K562 (cell line): ENCODE measurements at regions of chr3 and their contacts with region 1.

Region 1: GRCh38 chr3:155323063-155323666 is 29.7 kb upstream of the STRIT1 start:
- DNase-seq: peak; percentile 50 to 89 (median 62)
- ATAC-seq: peak; percentile 88
- H3K4me3 ChIP-seq: no peak overlapping the region
- H3K27ac ChIP-seq: no peak overlapping the region
- H3K4me1 ChIP-seq: peaks cover 0 to 12% of the 10 kb centered on the region in 2 experiments; a peak in 2 of 5 replicates
- H3K27me3 ChIP-seq: no peaks in the 10 kb centered on the region
- CTCF ChIP-seq: peak; percentile 74 to 94 (median 80)
- EP300 ChIP-seq: peak; percentile 38; the same call in 1 of the 2 replicates
- POLR2A ChIP-seq: no peak
- RAD21 ChIP-seq: peak; percentile 98

Region 2: GRCh38 chr3:154334973-154335420 is 988.2 kb before region 1 on chr3:
- CTCF ChIA-PET with region 1: no interaction called
- POLR2A ChIA-PET with region 1: no interaction called
- in situ Hi-C with region 1: no loop called
- intact Hi-C with region 1: loop called (anchors 1 kb)
- DNase-seq: peak in 3 of 4 experiments; percentile 20 to 32 (median 27)
- ATAC-seq: peak; percentile 70
- H3K4me3 ChIP-seq: no peak overlapping the region
- H3K27ac ChIP-seq: no peak overlapping the region
- H3K4me1 ChIP-seq: peaks cover 0 to 5% of the 10 kb centered on the region in 2 experiments; a peak in 2 of 5 replicates
- H3K27me3 ChIP-seq: no peaks in the 10 kb centered on the region; a peak in 1 of 5 replicates
- CTCF ChIP-seq: peak; percentile 11 to 59 (median 20); a peak in 3 of 6 replicates
- EP300 ChIP-seq: no peak
- POLR2A ChIP-seq: no peak
- RAD21 ChIP-seq: peak; percentile 30 to 41

Region 3: DNA sequence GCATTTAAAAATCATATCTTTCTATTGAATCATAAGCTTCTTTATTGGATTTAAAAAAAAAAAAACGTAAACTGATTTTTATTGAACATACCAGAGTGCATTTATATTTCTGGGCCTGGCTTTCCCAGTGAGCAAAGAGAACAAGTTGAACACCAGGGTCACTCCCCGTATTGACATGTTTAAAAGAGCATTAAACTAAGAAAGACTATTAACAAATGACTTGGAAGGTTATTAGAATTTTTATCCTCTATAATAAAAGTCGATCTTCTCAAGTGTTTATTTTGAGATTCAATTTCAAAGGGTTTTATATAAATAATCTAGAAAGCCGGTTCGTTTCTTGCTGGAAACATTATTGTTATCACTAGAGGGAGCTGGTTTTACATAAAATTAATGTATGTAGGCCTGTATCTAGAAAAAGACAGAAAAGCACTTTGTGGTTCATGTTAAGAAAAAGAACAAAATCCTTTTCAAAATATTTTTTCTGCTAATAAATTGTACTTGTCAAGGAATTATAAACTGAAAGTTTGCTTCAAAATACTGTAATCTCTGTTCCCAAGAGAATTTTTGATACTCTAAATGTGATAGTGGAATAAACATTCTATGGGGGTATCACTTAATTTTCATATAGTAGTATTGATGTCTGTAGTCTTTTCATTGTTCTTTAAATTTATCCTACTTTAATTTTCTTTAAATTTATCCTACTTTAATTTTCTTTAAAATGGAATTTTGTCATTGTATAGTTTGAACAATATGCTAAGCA is 564.9 kb before region 1 on chr3:
- CTCF ChIA-PET with region 1: interaction called, 12 read pairs
- POLR2A ChIA-PET with region 1: no interaction called
- in situ Hi-C with region 1: loop called (anchors 10 kb)
- intact Hi-C with region 1: loop called (anchors 1 kb)
- DNase-seq: peak in 1 of 4 experiments; percentile 16
- ATAC-seq: peak; percentile 69; the same call in 2 of the 3 replicates
- H3K4me3 ChIP-seq: no peak overlapping the region
- H3K27ac ChIP-seq: no peak overlapping the region
- H3K4me1 ChIP-seq: no peaks in the 10 kb centered on the region; a peak in 1 of 5 replicates
- H3K27me3 ChIP-seq: no peaks in the 10 kb centered on the region
- CTCF ChIP-seq: peak in 2 of 3 experiments; percentile 5 to 61; a peak in 3 of 6 replicates
- EP300 ChIP-seq: no peak
- POLR2A ChIP-seq: no peak
- RAD21 ChIP-seq: peak; percentile 72 to 88

Region 4: DNA sequence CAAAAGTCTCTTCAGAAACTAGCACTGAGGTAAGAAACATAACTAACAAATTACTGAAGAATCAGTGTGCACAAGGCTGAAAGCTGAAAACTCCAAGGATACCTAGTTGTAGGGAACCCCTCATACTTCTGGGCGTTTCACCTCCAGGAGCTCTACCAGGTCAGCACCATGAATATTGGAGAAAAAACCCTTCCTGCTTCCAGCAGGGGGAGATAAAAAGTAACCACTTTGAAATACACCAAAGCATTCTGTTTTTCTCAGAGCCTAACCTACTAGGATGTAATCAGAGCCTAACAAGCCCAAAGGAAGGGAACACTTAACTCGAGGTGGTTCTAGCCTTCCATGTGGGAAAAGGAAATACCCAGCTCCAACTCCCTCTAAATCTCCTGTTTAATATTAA is 418.8 kb before region 1 on chr3:
- CTCF ChIA-PET with region 1: interaction called, 3 read pairs
- POLR2A ChIA-PET with region 1: no interaction called
- in situ Hi-C with region 1: no loop called
- intact Hi-C with region 1: loop called (anchors 2 kb)
- DNase-seq: peak in 3 of 4 experiments; percentile 7 to 31 (median 21)
- ATAC-seq: peak; percentile 76
- H3K4me3 ChIP-seq: no peak overlapping the region
- H3K27ac ChIP-seq: no peak overlapping the region
- H3K4me1 ChIP-seq: no peaks in the 10 kb centered on the region
- H3K27me3 ChIP-seq: no peaks in the 10 kb centered on the region
- CTCF ChIP-seq: peak; percentile 31 to 51 (median 40); a peak in 5 of 6 replicates
- EP300 ChIP-seq: no peak
- POLR2A ChIP-seq: no peak
- RAD21 ChIP-seq: peak; percentile 27 to 60; a peak in 3 of 4 replicates

Region 5: DNA sequence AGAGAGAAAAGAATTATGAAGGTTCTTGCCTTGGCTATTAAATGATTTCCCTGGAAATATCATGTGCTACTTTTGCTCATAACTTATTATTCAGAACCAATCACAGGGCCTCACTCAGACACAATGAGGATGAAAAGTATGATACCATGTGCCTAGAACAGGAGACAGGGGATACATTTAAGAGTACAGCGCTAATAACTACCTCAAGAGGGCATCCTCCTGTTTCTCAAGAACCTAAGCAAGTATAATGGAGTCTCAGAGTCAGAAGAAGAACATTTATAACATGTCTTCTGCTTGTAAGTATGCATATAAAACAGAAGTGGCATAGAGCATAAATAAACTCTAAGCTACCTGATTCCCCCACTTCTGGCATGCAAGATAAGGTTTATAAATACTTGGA is 368.4 kb before region 1 on chr3:
- CTCF ChIA-PET with region 1: interaction called, 6 read pairs
- POLR2A ChIA-PET with region 1: no interaction called
- in situ Hi-C with region 1: loop called (anchors 5 kb)
- intact Hi-C with region 1: loop called (anchors 1 kb)
- DNase-seq: peak; percentile 17 to 48 (median 30)
- ATAC-seq: peak; percentile 91
- H3K4me3 ChIP-seq: no peak overlapping the region
- H3K27ac ChIP-seq: no peak overlapping the region
- H3K4me1 ChIP-seq: no peaks in the 10 kb centered on the region
- H3K27me3 ChIP-seq: no peaks in the 10 kb centered on the region
- CTCF ChIP-seq: peak; percentile 39 to 58 (median 45); a peak in 4 of 6 replicates
- EP300 ChIP-seq: no peak
- POLR2A ChIP-seq: no peak
- RAD21 ChIP-seq: peak; percentile 61 to 81

Region 6: GRCh38 chr3:155217591-155217990 is 105.6 kb before region 1 on chr3:
- CTCF ChIA-PET with region 1: no interaction called
- POLR2A ChIA-PET with region 1: no interaction called
- in situ Hi-C with region 1: no loop called
- intact Hi-C with region 1: loop called (anchors 10 kb)
- DNase-seq: no peak
- ATAC-seq: no peak
- H3K4me3 ChIP-seq: no peak overlapping the region
- H3K27ac ChIP-seq: no peak overlapping the region
- H3K4me1 ChIP-seq: no peaks in the 10 kb centered on the region
- H3K27me3 ChIP-seq: no peaks in the 10 kb centered on the region
- CTCF ChIP-seq: no peak
- EP300 ChIP-seq: no peak
- POLR2A ChIP-seq: no peak
- RAD21 ChIP-seq: no peak

Region 7: GRCh38 chr3:155778462-155778861 is 455.3 kb after region 1 on chr3:
- CTCF ChIA-PET with region 1: no interaction called
- POLR2A ChIA-PET with region 1: no interaction called
- in situ Hi-C with region 1: no loop called
- intact Hi-C with region 1: no loop called
- DNase-seq: no peak
- ATAC-seq: no peak
- H3K4me3 ChIP-seq: no peak overlapping the region
- H3K27ac ChIP-seq: no peak overlapping the region
- H3K4me1 ChIP-seq: no peaks in the 10 kb centered on the region
- H3K27me3 ChIP-seq: no peaks in the 10 kb centered on the region
- CTCF ChIP-seq: no peak
- EP300 ChIP-seq: no peak
- POLR2A ChIP-seq: no peak
- RAD21 ChIP-seq: no peak